CD4-positive, alpha-beta memory T cell (primary cell): ENCODE measurements at regions of chr1 and their contacts with region 1.

Region 1: GRCh38 chr1:159924981-159925712 is at the start of gene TAGLN2:
- DNase-seq: peak; percentile 87 to 91 (median 89)
- H3K4me3 ChIP-seq: peak within 1 kb of the TSS; percentile 89 to 93
- H3K4me3 Mint-ChIP-seq: peak within 1 kb of the TSS; percentile 94 to 99 (median 98)
- H3K27ac ChIP-seq: peak within 1 kb of the TSS; percentile 98
- H3K27ac Mint-ChIP-seq: peak within 1 kb of the TSS; percentile 99 to 100 (median 100)
- H3K4me1 ChIP-seq: peaks cover 41% of the 10 kb centered on the region
- H3K4me1 Mint-ChIP-seq: peaks cover 29 to 63% (median 41%) of the 10 kb centered on the region in 4 donors
- H3K27me3 ChIP-seq: no peaks in the 10 kb centered on the region
- H3K27me3 Mint-ChIP-seq: peaks cover 0 to 5% of the 10 kb centered on the region in 2 donors
- total RNA-seq, gene TAGLN2: 196 to 207 TPM

Region 2: GRCh38 chr1:159826441-159827101 is 98.6 kb before region 1 on chr1 and contains the start of gene SLAMF8:
- CTCF ChIA-PET with region 1: no interaction called
- POLR2A ChIA-PET with region 1: interaction called, 25 read pairs
- intact Hi-C with region 1: no loop called
- DNase-seq: peak; percentile 38 to 53 (median 42)
- H3K4me3 ChIP-seq: peak within 1 kb of the TSS in 1 of 2 donors; percentile 13
- H3K4me3 Mint-ChIP-seq: peak within 1 kb of the TSS in 7 of 8 donors; percentile 54 to 74 (median 64)
- H3K27ac ChIP-seq: no peak within 1 kb of the TSS
- H3K27ac Mint-ChIP-seq: peak within 1 kb of the TSS in 6 of 7 donors; percentile 54 to 85 (median 74)
- H3K4me1 ChIP-seq: peaks cover 42% of the 10 kb centered on the region
- H3K4me1 Mint-ChIP-seq: peaks cover 35 to 56% (median 48%) of the 10 kb centered on the region in 4 donors
- H3K27me3 ChIP-seq: no peaks in the 10 kb centered on the region
- H3K27me3 Mint-ChIP-seq: no peaks in the 10 kb centered on the region
- total RNA-seq, gene SLAMF8: 2.0 TPM

Region 3: GRCh38 chr1:159936273-159936904 is 11.2 kb after region 1 on chr1:
- CTCF ChIA-PET with region 1: interaction called, 41 read pairs
- POLR2A ChIA-PET with region 1: interaction called, 33 read pairs
- intact Hi-C with region 1: loop called (anchors 1 kb)
- DNase-seq: peak; percentile 69 to 81 (median 73)
- H3K4me3 ChIP-seq: no peak overlapping the region
- H3K4me3 Mint-ChIP-seq: peak overlapping the region in 1 of 8 donors; percentile 26
- H3K27ac ChIP-seq: no peak overlapping the region
- H3K27ac Mint-ChIP-seq: peak overlapping the region in 3 of 7 donors; percentile 40 to 68 (median 45)
- H3K4me1 ChIP-seq: peaks cover 15% of the 10 kb centered on the region
- H3K4me1 Mint-ChIP-seq: peaks cover 0 to 7% (median 3%) of the 10 kb centered on the region in 4 donors
- H3K27me3 ChIP-seq: no peaks in the 10 kb centered on the region
- H3K27me3 Mint-ChIP-seq: peaks cover 6 to 10% of the 10 kb centered on the region in 2 donors

Region 4: DNA sequence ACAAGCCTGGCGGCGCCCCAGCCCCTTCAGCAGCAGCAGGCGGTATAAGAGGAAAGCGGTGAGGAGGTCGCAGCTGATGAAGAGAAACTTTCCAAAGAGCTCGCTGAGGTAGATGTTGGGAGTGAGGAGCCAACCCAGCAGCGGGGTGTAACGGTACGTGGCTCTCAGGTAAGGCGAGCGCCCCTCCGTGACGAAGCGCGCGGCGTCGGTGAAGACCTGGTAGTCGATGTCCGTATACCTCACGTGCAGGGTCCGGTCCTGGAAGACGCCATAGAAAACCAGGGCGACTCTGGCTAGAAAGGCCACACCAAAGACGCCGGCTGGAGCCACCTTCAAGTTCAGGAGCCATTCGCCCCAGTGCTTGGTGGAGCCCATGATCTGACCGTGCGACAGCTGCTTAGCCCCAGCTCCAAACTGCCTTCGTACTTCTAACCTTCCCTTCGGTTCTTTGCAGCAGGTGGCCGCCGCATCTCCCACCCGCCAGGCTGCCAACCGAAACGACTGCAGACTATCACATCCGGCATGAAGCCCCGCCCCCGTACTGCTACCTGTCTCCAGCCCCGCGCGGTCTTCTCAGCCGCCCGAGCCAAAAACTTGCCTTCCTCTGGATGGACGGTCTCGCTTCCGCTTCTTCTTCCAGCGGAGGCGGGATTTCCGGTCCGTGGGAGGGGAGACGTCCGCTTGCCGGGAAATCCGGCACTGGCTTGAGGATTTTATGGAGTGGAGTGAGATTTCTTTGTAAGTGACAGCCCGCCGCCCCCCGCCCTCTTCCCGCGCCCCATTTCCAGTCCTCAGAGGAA is 106.4 kb after region 1 on chr1 and contains the start of gene PIGM:
- CTCF ChIA-PET with region 1: interaction called, 3 read pairs
- POLR2A ChIA-PET with region 1: interaction called, 36 read pairs
- intact Hi-C with region 1: loop called (anchors 1 kb)
- DNase-seq: peak; percentile 89 to 96 (median 91)
- H3K4me3 ChIP-seq: peak within 1 kb of the TSS; percentile 71 to 79
- H3K4me3 Mint-ChIP-seq: peak within 1 kb of the TSS; percentile 94 to 99 (median 98)
- H3K27ac ChIP-seq: peak within 1 kb of the TSS; percentile 57
- H3K27ac Mint-ChIP-seq: peak within 1 kb of the TSS; percentile 89 to 98 (median 97)
- H3K4me1 ChIP-seq: peaks cover 32% of the 10 kb centered on the region
- H3K4me1 Mint-ChIP-seq: peaks cover 27 to 42% (median 33%) of the 10 kb centered on the region in 4 donors
- H3K27me3 ChIP-seq: no peaks in the 10 kb centered on the region
- H3K27me3 Mint-ChIP-seq: no peaks in the 10 kb centered on the region
- total RNA-seq, gene PIGM: 11.7 to 12.3 TPM